ENCODE measurements at regions of chr4 and their contacts with region 1.

Region 1: DNA sequence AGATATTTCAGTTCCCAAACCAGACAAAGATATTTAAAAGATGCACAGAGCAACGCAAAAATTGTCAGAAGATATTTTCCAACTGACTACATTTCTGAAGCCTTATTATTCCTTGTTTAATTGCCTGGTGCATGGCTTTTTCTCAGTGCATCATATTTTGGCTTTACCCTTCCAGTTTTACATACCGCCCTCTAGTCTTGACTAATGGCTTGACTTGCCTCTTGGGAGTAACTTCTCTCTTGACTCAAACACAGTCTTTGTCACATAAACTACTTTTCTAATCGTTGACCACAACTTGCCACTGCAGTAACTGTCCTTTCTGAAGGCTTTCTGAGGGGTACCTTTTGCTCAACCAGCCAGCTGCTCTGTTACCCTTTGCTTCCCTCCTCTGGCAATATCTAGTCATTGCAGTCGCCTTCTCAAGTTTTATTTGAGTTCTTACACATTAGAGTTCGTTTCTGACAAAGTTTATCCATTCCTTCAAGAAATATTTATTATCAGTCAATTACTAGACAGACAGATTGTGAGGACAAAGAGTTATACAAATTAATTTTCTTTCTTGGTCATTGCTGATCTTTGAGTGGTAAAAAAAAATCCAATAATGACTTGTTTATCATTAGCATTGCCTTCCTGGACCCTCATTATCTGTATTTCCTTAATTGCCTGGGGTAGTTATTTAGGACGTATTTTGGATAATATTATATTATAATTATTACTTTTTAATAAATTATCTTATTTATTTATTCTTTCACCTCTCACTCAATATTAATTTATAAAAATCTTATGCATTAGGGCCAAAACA is 506.9 kb upstream of the PCDH10 start:
- DNase-seq: peak; percentile 85
- H3K4me3 ChIP-seq: no peak overlapping the region
- H3K27ac ChIP-seq: no peak overlapping the region
- H3K4me1 ChIP-seq: peaks cover 8% of the 10 kb centered on the region
- CTCF ChIP-seq: peak; percentile 98

Region 2: GRCh38 chr4:131091896-131092295 is 1550.3 kb before region 1 on chr4:
- CTCF ChIA-PET with region 1: no interaction called
- POLR2A ChIA-PET with region 1: no interaction called
- intact Hi-C with region 1: loop called (anchors 10 kb)
- DNase-seq: peak; percentile 41
- H3K4me3 ChIP-seq: no peak overlapping the region
- H3K27ac ChIP-seq: no peak overlapping the region
- H3K4me1 ChIP-seq: no peaks in the 10 kb centered on the region
- CTCF ChIP-seq: peak; percentile 76

Measured in OCI-LY7 (cell line).